Sciatic nerve (tissue), 2 donors: ENCODE measurements at regions of chr12 and their contacts with region 1.

Region 1: GRCh38 chr12:109428037-109428629 is 49.0 kb downstream of the KCTD10 start:
- DNase-seq: peak; percentile 90
- ATAC-seq: peak; percentile 91

Region 2: GRCh38 chr12:109458771-109459208 is 30.7 kb after region 1 on chr12:
- intact Hi-C with region 1: loop called (anchors 1 kb)
- DNase-seq: no peak
- ATAC-seq: no peak

Region 3: DNA sequence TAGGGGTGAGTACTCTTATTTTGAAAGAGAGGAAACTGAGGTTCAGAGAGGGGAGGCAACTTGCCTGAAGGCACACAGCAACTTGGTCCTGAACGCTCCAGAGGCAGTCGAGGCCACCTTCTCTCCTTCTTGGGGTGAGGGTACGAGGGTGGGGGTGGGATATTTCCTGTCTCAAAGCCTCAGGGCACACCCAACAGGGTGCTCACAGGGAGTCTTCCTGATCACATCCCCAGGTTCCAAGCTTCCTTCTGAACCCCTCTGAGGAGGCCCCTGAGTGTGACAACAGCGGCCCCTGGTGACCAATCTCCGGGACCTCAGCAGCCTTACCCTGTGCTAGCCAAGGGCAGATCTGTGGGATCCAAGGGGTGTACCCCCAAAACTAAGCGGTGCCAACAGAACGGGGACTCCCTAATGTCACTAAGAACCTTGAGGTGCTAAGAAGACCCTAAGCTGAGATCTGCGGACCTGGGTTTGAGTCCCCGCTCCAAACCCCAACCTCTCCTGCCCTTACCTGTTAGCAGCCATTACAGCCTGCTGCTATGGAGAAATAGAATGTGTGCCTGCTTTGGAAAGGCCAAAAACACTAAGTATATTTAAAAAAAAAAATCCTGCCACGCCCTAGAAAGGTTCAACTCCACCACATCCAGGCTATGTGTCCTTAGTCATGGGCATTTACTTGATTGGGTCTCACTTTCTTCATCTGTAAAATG is 347.2 kb after region 1 on chr12:
- intact Hi-C with region 1: loop called (anchors 10 kb)
- DNase-seq: peak; percentile 89
- ATAC-seq: peak; percentile 82